HCT116 (cell line): ENCODE measurements at regions of chr13 and their contacts with region 1.

Region 1: DNA sequence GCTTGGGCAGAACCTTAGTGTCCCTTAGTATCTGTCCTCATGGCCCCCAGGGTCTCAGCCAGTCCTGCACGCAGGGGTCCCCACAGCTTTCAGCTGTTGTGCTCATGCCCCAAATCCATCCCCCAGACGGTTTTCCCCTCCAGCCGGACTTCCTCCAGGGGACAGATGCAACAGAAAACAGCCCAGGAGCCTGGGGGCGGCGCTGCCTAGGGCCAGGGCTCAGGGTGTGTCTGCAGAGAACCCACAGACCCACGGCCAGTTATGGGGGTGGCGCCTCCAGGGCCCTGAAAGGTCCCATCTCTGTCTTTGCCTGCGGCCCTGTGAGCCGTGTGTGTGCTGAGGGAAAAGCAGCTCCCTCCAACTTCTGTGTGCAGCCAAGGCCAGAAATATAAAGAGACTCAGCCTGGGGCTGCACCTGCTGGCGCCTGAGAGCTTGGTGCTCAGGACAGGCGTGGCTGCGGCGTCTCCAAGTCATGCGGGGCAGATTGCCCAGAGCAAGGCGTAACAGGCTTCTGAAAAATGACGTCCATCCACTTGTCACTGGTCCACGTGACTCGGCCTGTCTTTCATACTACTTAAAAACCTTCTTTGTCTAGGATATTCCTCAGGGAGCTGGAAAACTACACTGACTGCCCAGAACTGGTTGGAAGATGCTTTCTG is 22.1 kb upstream of the F7 start:
- DNase-seq: peak; percentile 42
- ATAC-seq: peak; percentile 75
- H3K4me3 ChIP-seq: no peak overlapping the region
- H3K27ac ChIP-seq: no peak overlapping the region
- H3K4me1 ChIP-seq: peaks cover 7 to 11% of the 10 kb centered on the region in 2 experiments; a peak in 3 of 4 replicates
- H3K27me3 ChIP-seq: no peaks in the 10 kb centered on the region
- CTCF ChIP-seq: no peak
- POLR2A ChIP-seq: no peak
- RAD21 ChIP-seq: no peak

Region 2: DNA sequence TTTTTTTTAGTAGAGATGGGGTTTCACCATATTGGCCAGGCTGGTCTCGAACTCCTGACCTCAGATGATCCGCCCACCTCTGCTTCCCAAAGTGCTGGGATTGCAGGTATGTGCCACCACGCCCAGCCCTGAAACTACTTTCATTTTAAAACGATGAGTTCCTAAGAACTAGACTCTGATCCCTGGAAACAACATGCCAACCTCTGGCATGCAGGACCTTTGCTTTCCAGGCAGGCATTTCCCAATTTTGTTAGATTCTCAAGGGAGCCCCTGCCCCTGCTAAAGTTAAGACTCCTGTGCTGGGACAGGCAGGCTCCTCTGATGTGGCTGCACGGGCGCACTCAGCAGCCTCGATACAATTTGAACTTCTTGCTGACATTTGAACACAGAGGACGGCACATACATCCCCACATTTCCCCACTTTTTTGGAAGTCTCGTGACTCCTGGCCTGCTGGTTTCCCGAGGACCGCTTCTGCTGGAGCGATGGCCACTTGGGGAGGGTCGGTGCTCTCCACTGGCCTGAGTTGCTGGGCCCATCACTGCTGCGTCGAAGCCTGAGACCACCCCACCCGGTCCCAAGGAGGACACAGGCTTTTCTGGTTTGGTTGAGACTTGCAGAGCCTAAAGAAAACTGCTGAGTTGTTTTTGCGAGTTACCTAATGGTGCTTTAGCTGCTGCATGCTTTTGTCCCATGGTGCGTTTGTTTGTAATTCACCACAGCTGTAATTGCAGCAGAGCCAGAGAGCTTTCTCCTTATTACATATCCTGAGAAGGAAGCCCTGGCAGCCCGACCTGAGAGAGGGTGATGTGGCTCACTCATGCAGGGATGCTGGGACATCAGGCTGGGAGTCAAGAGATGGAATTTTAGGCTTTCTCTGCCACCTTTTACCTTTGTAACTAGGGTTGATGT is 385.5 kb before region 1 on chr13:
- CTCF ChIA-PET with region 1: no interaction called
- POLR2A ChIA-PET with region 1: no interaction called
- RAD21 ChIA-PET with region 1: no interaction called
- intact Hi-C with region 1: no loop called
- DNase-seq: no peak
- ATAC-seq: no peak
- H3K4me3 ChIP-seq: no peak overlapping the region
- H3K27ac ChIP-seq: no peak overlapping the region
- H3K4me1 ChIP-seq: peaks cover 0 to 5% of the 10 kb centered on the region in 2 experiments; a peak in 1 of 4 replicates
- H3K27me3 ChIP-seq: no peaks in the 10 kb centered on the region
- CTCF ChIP-seq: no peak
- POLR2A ChIP-seq: no peak
- RAD21 ChIP-seq: no peak

Region 3: DNA sequence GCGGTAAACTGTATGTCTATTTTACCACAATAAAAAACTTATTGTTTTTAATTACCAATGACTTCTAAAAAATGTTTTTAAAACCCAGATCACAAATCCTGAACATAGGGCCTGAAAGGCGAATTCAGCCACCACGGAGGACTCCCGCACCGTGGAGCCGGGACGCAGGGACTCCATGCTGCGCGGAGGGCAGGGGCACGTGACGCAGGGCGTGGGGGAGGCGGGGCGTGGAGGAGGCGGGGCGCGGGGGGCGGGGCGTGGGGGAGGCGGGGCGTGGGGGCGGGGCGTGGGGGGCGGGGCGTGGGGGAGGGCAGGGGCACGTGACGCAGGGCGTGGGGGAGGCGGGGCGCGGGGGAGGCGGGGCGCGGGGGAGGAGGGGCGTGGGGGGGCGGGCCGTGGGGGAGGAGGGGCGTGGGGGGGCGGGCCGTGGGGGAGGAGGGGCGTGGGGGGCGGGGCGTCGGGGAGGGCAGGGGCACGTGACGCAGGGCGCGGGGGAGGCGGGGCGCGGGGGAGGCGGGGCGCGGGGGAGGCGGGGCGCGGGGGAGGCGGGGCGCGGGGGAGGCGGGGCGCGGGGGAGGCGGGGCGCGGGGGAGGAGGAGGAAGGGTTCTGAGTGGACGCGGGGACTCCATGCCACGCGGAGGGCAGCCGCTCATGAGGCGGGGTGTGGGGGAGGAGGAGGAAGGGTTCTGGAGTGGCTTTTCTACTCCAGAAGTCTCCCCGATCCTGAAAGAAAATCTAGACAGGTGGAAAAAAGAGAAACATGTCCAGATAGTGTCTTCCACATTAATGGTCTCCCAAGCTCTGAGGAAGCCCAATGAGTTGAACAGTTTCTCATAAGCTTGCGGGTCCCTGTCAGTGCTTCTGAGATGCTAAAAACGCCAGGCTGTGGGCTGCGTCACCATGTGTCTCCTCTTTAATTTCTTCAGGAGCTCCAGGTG is 70.5 kb after region 1 on chr13:
- CTCF ChIA-PET with region 1: no interaction called
- POLR2A ChIA-PET with region 1: no interaction called
- RAD21 ChIA-PET with region 1: no interaction called
- intact Hi-C with region 1: loop called (anchors 10 kb)
- DNase-seq: peak; percentile 18
- ATAC-seq: peak; percentile 77
- H3K4me3 ChIP-seq: peak overlapping the region; percentile 26 to 45
- H3K27ac ChIP-seq: peak overlapping the region; percentile 68
- H3K4me1 ChIP-seq: peaks cover 9 to 16% of the 10 kb centered on the region in 2 experiments
- H3K27me3 ChIP-seq: no peaks in the 10 kb centered on the region
- CTCF ChIP-seq: no peak
- POLR2A ChIP-seq: peak; percentile 81
- RAD21 ChIP-seq: no peak